Activated CD4-positive, alpha-beta memory T cell treated with anti-CD3 and anti-CD28 coated beads for 36 hours (primary cell): ENCODE measurements at regions of chr11 and their contacts with region 1.

Region 1: DNA sequence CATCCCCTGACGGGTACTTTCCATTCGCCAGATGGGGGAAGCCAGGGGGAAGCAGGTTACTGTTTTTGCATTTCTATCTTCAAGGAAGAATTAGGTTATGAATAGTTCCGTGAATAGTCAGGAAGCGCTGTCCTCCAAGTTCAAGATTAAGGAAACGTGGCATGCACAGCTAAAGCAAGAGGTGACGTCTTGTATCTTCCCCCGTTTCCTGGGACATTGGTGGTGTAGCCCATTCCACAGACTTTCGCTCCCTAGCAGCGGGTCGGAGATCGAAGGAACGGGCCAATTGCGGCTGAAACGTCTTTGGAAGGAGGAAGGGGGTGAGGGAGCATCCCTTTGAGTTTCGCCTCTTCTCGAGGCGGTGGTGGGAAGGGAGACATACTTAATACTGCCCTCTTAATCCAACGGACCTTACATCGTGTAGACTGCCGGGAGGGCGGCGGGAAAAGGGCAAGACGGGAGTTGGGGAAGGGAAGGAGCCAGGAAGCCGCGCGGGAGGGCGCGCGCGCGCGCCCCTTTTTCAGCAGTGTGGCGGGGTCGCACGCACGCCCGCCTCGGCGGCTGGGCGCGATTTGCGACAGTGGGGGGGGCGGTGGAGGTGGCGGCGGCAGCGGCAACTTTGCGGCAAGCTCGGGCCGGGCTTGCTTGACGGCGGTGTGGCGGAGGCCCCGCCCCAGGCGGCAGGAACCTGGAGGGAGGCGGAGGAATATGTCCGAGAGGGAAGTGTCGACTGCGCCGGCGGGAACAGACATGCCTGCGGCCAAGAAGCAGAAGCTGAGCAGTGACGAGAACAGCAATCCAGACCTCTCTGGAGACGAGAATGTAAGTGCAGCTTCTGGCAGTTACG is at the start of gene EED:
- DNase-seq: peak; percentile 96
- H3K4me3 Mint-ChIP-seq: no peak within 1 kb of the TSS
- H3K27ac Mint-ChIP-seq: no peak within 1 kb of the TSS
- H3K4me1 Mint-ChIP-seq: peaks cover 33% of the 10 kb centered on the region
- H3K27me3 Mint-ChIP-seq: no peaks in the 10 kb centered on the region
- total RNA-seq, gene EED: 170 TPM

Region 2: DNA sequence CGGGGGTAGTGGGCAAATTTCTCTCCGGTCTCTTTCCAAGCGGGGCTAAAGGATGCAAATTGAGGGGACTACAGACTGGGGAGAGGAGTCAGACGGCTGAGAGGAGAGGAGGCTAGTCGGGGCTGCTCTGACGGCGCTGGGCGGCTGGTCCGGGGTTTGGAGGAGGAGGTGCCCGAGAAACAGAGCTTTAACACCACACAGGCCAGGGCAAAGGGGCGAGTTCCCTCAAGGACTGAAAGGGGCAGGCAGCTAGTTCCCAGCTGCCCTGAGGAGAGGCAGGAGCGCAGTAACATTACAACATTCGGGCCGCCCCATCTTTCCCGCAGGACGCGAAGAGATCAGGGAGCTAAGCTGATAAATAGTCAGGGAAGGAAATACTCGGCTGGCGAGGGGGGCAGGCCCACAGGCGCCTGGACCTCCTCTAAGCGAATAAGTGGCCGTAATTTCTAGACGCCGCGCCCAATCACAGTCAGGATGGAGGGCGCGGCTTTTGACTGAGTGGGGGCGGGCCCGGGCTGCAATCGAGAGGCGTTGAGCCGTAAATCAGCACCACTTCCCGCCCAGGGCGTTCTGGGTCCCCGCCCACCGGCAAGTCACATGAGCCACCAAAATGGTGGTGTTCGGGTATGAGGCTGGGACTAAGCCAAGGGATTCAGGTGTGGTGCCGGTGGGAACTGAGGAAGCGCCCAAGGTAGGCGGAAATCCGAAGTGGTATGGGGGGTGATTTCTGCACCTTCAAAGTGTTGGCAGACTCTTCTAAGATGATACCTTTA is 616.6 kb before region 1 on chr11 and contains the start of gene TMEM126B:
- CTCF ChIA-PET with region 1: no interaction called
- POLR2A ChIA-PET with region 1: no interaction called
- intact Hi-C with region 1: loop called (anchors 1 kb)
- DNase-seq: peak; percentile 98
- H3K4me3 Mint-ChIP-seq: peak within 1 kb of the TSS; percentile 100
- H3K27ac Mint-ChIP-seq: peak within 1 kb of the TSS; percentile 99
- H3K4me1 Mint-ChIP-seq: peaks cover 38% of the 10 kb centered on the region
- H3K27me3 Mint-ChIP-seq: no peaks in the 10 kb centered on the region
- total RNA-seq, gene TMEM126B: 59.8 to 64.5 TPM

Region 3: GRCh38 chr11:85759915-85760314 is 484.8 kb before region 1 on chr11:
- CTCF ChIA-PET with region 1: no interaction called
- POLR2A ChIA-PET with region 1: no interaction called
- intact Hi-C with region 1: loop called (anchors 10 kb)
- DNase-seq: no peak
- H3K4me3 Mint-ChIP-seq: no peak overlapping the region
- H3K27ac Mint-ChIP-seq: no peak overlapping the region
- H3K4me1 Mint-ChIP-seq: peaks cover 64% of the 10 kb centered on the region
- H3K27me3 Mint-ChIP-seq: no peaks in the 10 kb centered on the region

Region 4: DNA sequence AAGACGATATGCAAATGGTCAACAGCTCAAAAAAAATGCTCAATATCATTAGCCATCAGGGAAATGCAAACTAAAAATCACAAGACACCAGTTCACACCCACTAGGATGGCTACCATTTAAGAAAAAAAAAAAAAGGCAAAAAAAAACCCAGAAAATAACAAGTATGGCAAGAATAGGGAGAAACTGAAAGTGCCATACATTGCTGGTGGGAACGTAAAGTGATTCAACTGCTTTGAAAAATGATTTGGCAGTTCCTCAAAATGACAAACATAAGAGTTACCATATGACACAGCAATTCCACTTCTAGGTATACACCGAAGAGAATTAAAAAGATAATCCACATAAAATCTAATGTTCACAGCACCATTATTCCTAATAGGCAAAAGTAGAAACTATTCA is 223.4 kb before region 1 on chr11:
- CTCF ChIA-PET with region 1: no interaction called
- POLR2A ChIA-PET with region 1: no interaction called
- intact Hi-C with region 1: no loop called
- DNase-seq: no peak
- H3K4me3 Mint-ChIP-seq: no peak overlapping the region
- H3K27ac Mint-ChIP-seq: peak overlapping the region; percentile 33
- H3K4me1 Mint-ChIP-seq: peaks cover 46% of the 10 kb centered on the region
- H3K27me3 Mint-ChIP-seq: no peaks in the 10 kb centered on the region

Region 5: DNA sequence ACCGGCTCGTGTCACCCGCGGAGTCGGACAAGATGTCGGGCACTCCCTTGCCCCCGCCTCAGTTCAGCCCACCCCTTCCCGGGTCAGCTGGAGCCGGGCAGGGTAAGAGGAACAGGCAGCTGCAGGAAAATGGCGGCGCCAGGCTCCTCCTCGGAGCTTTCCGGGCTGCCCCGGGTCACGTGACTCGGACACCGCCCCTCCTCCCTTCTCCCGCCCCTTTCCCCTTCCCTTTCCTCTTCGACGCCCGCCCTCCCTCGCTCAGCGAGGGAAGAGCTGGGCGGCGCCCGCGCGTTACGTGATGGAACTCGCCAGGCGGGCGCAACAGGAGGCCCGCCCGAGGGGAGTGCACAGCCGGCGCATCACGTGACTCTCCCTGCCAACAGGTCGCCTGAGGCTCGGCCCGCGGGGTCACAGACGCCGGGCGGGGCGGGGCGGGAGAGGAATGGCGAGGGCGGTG is 175.8 kb before region 1 on chr11 and contains the start of gene PICALM:
- CTCF ChIA-PET with region 1: interaction called, 6 read pairs
- POLR2A ChIA-PET with region 1: interaction called, 81 read pairs
- intact Hi-C with region 1: loop called (anchors 1 kb)
- DNase-seq: peak; percentile 99
- H3K4me3 Mint-ChIP-seq: peak within 1 kb of the TSS; percentile 96
- H3K27ac Mint-ChIP-seq: peak within 1 kb of the TSS; percentile 88
- H3K4me1 Mint-ChIP-seq: peaks cover 25% of the 10 kb centered on the region
- H3K27me3 Mint-ChIP-seq: no peaks in the 10 kb centered on the region
- total RNA-seq, gene PICALM: 75.9 to 90.4 TPM

Region 6: DNA sequence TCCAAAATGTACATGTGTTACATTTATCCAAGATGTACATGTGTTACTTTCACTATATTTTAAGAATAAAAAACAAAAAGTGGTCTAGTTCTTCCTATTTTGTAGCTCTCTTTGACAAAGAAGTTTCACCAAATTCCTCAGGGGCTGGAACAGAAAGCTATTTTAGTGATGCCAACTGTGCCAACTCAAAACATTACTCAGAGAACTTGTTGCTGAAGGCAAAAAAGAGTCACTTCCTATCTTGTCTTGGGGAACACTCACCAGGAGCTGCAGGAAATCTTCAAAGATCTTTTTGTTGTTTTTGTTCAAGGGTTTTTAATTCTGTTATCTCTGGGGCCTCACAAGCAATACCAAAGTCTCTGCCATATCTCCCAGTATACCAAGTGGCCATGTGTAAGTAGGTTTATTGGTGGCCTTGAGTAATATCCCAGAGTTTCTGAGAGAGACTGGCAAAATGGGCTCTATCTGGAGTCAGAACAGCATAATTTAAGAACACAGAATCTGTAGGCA is 13.8 kb before region 1 on chr11:
- CTCF ChIA-PET with region 1: interaction called, 9 read pairs
- POLR2A ChIA-PET with region 1: interaction called, 43 read pairs
- intact Hi-C with region 1: loop called (anchors 1 kb)
- DNase-seq: no peak
- H3K4me3 Mint-ChIP-seq: no peak overlapping the region
- H3K27ac Mint-ChIP-seq: peak overlapping the region; percentile 77
- H3K4me1 Mint-ChIP-seq: peaks cover 66% of the 10 kb centered on the region
- H3K27me3 Mint-ChIP-seq: no peaks in the 10 kb centered on the region